ENCODE measurements at regions of chr16 and their contacts with region 1.

Region 1: GRCh38 chr16:19396555-19397011 is 21.1 kb upstream of the TMC5 start:
- DNase-seq: peak; percentile 40 to 65 (median 52)
- ATAC-seq: peak; percentile 71
- H3K4me3 ChIP-seq: no peak overlapping the region
- H3K27ac ChIP-seq: peak overlapping the region; percentile 11 to 69 (median 42)
- H3K4me1 ChIP-seq: peaks cover 10% of the 10 kb centered on the region
- H3K27me3 ChIP-seq: no peaks in the 10 kb centered on the region
- CTCF ChIP-seq: no peak
- POLR2A ChIP-seq: no peak

Region 2: DNA sequence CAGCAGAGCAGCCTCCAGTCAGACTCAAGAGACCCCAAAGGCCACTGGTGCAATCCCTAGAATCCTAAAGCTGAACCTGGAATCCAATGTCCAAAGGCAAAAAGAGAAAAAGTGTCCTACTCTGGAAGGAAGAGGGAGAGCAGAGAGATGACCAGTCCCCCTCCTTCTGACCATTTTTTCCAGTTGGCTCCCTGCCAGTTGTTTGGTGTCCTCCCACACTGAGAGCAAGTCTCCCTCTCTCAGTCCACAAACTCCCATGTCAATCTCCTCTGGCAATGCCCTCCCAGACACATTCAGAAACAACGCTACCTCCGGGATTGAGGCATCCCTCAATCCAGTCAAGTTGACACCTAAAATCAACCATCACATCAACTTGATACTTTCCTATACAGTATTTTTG is 115.3 kb before region 1 on chr16:
- intact Hi-C with region 1: no loop called
- DNase-seq: no peak
- ATAC-seq: no peak
- H3K4me3 ChIP-seq: no peak overlapping the region
- H3K27ac ChIP-seq: no peak overlapping the region
- H3K4me1 ChIP-seq: peaks cover 5% of the 10 kb centered on the region
- H3K27me3 ChIP-seq: no peaks in the 10 kb centered on the region
- CTCF ChIP-seq: no peak
- POLR2A ChIP-seq: no peak

Region 3: DNA sequence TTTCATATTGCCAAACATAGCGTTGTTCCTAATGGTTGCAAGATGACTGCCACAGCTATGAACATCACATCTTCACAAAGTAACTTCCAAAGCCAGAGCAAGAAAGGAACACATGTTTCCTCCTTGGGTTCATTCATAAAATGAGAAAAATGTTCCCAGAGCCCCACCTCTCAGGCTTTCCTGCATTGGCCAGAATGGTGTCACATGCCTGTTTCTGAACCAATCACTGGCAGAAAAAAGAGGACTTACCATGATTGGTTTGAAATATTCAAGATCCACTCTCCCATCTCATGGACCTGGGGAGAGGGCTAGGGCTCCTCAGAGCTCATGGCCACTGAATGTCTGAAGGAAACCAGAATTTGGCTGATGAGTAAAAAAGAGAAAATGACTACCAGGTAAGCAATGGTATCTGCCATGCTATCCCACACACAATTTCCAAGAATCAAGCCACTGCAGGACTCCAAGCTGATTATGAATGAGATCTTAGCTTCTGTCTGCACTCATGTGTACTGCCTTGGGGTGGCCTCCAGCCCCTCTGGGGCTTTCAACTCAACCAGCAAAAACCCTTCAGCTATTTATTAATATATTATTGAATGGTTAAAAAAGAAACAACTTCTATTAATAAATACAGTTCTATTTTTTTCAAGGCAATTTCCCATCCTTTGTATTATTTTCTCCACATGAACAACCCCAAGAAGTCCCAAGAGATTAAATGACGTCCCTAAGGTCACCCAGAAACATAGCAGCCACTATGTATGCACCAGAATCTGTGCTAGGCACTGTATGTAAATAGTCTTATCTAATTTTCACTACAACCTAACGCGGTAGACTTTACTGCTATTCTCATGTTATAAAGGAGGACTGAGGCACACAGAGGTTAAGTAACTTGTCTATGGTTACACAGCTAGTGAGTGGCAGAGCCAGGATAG is 40.3 kb before region 1 on chr16:
- intact Hi-C with region 1: no loop called
- DNase-seq: no peak
- ATAC-seq: no peak
- H3K4me3 ChIP-seq: no peak overlapping the region
- H3K27ac ChIP-seq: no peak overlapping the region
- H3K4me1 ChIP-seq: no peaks in the 10 kb centered on the region
- H3K27me3 ChIP-seq: no peaks in the 10 kb centered on the region
- CTCF ChIP-seq: no peak
- POLR2A ChIP-seq: no peak

Region 4: GRCh38 chr16:19474617-19475016 is 78.0 kb after region 1 on chr16:
- intact Hi-C with region 1: no loop called
- DNase-seq: no peak
- ATAC-seq: no peak
- H3K4me3 ChIP-seq: no peak overlapping the region
- H3K27ac ChIP-seq: no peak overlapping the region
- H3K4me1 ChIP-seq: no peaks in the 10 kb centered on the region
- H3K27me3 ChIP-seq: no peaks in the 10 kb centered on the region
- CTCF ChIP-seq: no peak
- POLR2A ChIP-seq: no peak

Region 5: DNA sequence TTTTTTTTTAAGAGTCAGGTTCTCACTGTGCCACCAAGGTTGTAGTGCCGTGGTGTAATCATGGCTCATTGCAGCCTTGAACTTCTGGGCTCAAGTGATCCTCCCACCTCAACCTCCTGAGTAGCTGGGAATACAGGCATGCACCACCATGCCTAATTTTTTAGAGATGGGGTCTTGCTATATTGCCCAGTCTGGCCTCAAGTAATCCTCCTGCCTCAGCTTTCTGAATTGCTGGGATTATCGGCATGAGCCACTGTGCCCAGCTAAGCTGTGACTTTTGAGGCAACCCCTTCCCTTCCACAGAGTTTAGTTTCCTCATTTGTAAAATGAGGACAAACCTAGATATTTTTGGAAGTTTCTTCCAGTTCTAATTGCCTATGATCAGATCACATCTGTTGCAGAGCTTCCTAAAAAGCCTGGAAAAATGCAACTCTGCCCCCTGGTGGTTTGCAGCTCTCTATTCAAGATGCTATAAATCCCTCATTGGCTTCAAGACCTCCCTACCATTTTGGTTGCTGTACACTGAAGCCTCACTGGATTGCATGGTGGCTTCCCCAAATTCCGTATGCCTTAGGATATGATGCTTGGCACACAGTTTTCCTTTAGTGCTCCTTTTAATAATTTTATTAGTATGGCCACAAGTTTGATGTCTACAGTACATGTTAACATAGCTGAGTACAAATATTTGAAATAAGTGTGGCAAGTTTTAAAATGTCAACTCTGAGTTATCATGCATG is 106.0 kb after region 1 on chr16:
- intact Hi-C with region 1: loop called (anchors 5 kb)
- DNase-seq: peak; percentile 75 to 80 (median 79)
- ATAC-seq: peak; percentile 75
- H3K4me3 ChIP-seq: no peak overlapping the region
- H3K27ac ChIP-seq: no peak overlapping the region
- H3K4me1 ChIP-seq: no peaks in the 10 kb centered on the region
- H3K27me3 ChIP-seq: no peaks in the 10 kb centered on the region
- CTCF ChIP-seq: peak; percentile 65 to 78 (median 70)
- POLR2A ChIP-seq: no peak

Region 6: GRCh38 chr16:20004932-20005331 is 608.3 kb after region 1 on chr16:
- intact Hi-C with region 1: no loop called
- DNase-seq: no peak
- ATAC-seq: no peak
- H3K4me3 ChIP-seq: no peak overlapping the region
- H3K27ac ChIP-seq: no peak overlapping the region
- H3K4me1 ChIP-seq: peaks cover 6% of the 10 kb centered on the region
- H3K27me3 ChIP-seq: no peaks in the 10 kb centered on the region
- CTCF ChIP-seq: no peak
- POLR2A ChIP-seq: no peak